ENCODE measurements at regions of chr14 and their contacts with region 1.

Region 1: DNA sequence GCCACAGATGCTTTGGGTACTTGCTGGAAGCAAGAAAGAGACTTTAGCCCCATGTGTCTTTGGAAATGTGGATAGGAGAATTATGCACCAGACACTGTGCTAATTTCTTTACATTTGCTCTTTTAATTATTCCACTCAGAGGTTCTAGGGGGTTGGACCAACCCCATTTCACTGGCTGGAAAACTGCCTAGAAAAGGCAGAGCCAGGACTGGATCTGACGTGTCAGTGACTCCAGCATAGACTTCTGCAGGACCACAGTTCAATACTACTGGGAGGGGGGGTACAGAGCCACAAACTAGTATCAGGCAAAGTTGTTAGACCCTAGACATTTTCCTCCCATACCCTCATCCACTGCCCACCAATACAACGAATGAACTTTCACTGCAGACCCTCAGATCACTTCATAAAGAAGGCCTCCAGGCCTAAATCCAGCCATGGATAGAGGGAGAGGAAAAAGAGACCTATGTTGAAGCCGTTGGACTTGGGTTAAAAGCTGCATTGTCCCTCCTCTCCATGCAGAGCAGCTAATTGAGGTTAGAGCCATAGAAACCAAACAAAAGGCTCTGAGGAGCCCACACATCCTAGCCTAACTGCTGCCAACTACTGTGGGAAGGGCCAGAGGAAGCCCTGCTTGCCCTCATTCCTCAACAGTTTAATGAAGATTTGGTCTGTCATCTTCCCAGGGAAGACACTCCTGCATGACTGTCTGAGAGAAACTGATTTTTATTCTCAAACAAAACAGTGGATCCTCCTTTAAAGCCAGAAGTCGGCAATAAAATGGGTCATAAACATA is 68.7 kb downstream of the STON2 start:
- DNase-seq: peak; percentile 29
- H3K4me3 ChIP-seq: no peak overlapping the region
- H3K27ac ChIP-seq: peak overlapping the region; percentile 97
- H3K4me1 ChIP-seq: peaks cover 44% of the 10 kb centered on the region
- H3K27me3 ChIP-seq: no peaks in the 10 kb centered on the region
- CTCF ChIP-seq: no peak

Region 2: DNA sequence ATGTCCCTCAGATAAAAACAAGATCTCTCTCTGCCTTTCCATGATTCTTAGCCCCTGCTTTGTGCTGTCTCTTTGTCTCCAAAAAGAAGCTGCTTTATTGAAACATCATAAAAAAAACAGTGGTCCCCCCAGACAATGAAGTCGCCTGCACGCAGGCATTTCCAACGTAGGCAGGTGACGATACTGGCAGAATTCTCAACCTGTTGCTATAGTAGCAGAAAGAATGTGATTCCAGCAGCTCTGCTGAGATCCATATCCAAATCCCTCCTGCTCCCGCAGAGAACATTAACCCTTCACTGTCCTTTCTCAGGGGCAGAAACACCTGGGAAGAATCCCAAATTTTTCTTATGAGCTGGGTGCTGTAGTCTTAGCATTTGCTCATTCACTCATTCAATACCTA is 16.1 kb before region 1 on chr14:
- CTCF ChIA-PET with region 1: no interaction called
- dilution Hi-C with region 1: no loop called
- in situ Hi-C with region 1: no loop called
- intact Hi-C with region 1: loop called (anchors 1 kb)
- DNase-seq: no peak
- H3K4me3 ChIP-seq: no peak overlapping the region
- H3K27ac ChIP-seq: peak overlapping the region; percentile 88
- H3K4me1 ChIP-seq: peaks cover 58% of the 10 kb centered on the region
- H3K27me3 ChIP-seq: no peaks in the 10 kb centered on the region
- CTCF ChIP-seq: no peak

Region 3: DNA sequence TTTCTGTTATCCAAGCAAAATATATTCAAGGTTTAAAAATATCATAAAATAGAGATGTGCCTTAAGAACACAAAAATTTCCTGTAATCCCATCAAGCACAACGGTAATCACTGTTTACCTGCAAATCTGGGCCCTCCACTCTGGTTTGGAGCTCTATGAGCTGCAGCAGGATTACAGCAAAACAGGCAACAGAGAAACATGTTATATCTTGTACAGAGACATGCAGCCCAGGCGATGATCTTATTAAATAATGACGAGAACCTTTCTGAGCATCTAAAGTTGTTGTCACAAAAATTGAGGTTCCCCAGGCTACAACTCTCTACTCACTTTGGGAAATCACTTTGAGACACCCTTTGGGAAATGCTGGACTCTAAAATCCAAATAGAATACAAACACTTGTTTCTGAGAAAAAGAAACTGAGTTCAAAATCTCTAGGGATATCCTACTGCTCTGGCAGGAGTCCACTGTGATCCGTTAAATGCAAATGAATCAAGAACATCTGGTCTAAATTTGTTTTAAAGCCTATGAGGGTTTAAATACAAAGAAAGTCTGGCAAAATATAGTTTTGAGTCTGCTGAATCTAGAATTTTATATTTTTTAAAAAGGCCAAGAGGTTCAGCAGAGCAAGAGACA is 32.4 kb after region 1 on chr14:
- CTCF ChIA-PET with region 1: no interaction called
- dilution Hi-C with region 1: no loop called
- in situ Hi-C with region 1: no loop called
- intact Hi-C with region 1: loop called (anchors 2 kb)
- DNase-seq: peak; percentile 47
- H3K4me3 ChIP-seq: peak overlapping the region in 2 of 3 experiments; percentile 22 to 38
- H3K27ac ChIP-seq: peak overlapping the region; percentile 61
- H3K4me1 ChIP-seq: peaks cover 28% of the 10 kb centered on the region
- H3K27me3 ChIP-seq: no peaks in the 10 kb centered on the region
- CTCF ChIP-seq: no peak

Region 4: DNA sequence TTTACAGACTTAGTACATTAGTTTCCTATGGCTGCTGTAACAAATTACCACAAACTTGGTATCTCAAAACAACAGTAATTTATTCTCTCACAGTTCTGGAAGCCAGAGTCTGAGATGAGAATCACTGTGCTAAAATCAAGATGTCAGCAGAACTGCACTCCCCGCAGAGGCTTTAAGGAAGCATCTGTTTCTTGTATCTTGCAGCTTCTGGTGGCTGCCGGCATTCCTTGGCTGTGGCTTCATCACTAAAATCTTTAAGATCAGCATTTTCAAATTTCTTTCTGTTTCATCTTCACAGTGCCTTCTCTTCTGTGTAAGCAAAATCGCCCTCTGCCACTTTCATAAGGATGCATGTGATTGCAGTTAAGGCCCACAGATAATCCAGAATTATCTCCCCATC is 59.3 kb after region 1 on chr14:
- CTCF ChIA-PET with region 1: no interaction called
- dilution Hi-C with region 1: loop called (anchors 5 kb)
- in situ Hi-C with region 1: no loop called
- intact Hi-C with region 1: no loop called
- DNase-seq: no peak
- H3K4me3 ChIP-seq: no peak overlapping the region
- H3K27ac ChIP-seq: no peak overlapping the region
- H3K4me1 ChIP-seq: peaks cover 21% of the 10 kb centered on the region
- H3K27me3 ChIP-seq: no peaks in the 10 kb centered on the region
- CTCF ChIP-seq: no peak

Region 5: DNA sequence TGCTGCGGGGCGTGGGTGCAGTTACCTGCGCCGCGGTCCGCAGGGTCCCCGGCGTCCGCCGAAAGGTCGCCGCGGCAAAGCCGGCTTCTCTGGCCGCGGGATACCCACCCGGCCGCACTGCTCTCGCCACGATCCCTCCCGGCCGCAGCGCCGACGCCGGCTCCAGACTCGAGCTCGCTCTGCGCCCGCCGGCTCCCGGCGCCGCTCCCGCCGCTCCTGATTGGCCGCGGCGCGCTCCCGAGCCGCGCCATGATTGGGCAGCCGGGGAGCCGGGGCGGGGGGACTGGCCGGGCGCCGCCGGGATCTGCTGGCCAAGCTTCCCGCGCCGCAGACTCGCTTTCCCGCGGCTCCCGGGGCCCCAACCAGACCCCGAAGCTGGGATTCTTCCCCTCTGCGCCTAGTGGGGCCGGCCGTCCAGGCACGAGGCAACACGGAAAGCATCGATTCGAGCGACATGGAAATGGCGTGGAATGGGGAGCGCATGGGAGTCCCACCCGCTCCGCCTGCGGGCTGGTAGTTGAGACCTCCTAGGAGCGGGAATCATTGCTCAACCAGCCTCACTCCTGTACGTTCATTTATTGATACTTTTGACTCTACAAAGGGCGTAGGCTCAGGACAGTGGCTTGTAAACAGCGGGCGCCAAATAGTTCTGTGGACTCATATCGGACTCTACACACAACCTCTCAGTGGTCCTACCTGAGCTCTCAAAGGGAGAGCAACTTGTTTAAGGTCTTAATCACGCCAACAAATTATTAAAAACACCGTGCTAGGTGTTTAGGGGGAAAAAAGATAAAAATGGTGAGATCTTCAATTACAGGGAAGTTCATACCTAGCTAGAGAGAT is 105.1 kb after region 1 on chr14:
- CTCF ChIA-PET with region 1: no interaction called
- dilution Hi-C with region 1: loop called (anchors 5 kb)
- in situ Hi-C with region 1: no loop called
- intact Hi-C with region 1: loop called (anchors 1 kb)
- DNase-seq: peak; percentile 84
- H3K4me3 ChIP-seq: peak overlapping the region; percentile 46 to 78 (median 69)
- H3K27ac ChIP-seq: peak overlapping the region; percentile 25
- H3K4me1 ChIP-seq: peaks cover 41% of the 10 kb centered on the region
- H3K27me3 ChIP-seq: no peaks in the 10 kb centered on the region
- CTCF ChIP-seq: no peak

Measured in mammary epithelial cell (primary cell).